Naive thymus-derived CD4-positive, alpha-beta T cell (primary cell): ENCODE measurements at regions of chr5 and their contacts with region 1.

Region 1: DNA sequence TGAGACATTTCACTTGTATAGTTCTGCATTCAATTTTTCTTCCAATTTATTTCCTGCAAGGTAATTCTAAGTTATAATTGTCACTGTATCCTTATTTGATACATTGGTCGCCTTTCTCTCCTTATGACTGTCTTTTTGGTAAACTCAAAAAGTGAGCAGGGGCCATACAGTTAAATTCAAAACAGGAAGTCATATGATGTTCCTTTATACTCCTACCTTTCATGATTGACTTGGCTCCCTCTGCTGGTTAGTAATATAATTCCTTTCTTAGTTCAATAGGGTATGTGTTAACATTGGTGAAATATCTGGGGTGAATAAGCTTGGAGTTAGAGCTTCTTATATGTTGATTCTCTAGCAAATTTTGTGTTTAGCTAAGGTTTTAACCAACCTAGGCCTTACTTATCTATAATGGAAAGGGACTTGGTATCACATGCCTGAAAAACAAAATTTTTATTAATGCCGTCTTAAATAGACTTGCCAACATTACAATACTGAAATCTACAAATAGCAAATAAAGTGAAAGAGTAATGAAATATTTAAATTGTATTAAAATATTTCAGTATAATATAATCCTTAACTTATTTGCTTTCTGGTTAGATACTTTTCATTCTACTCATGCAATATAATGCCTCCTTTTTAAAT is 6.0 kb upstream of the NIPBL start:
- DNase-seq: peak in 7 of 9 donors; percentile 56 to 78 (median 71)
- ATAC-seq: peak; percentile 92
- H3K4me3 ChIP-seq: no peak overlapping the region
- H3K4me3 Mint-ChIP-seq: peak overlapping the region in 9 of 10 donors; percentile 13 to 75 (median 57)
- H3K27ac ChIP-seq: no peak overlapping the region
- H3K27ac Mint-ChIP-seq: peak overlapping the region in 8 of 9 donors; percentile 6 to 70 (median 38)
- H3K4me1 ChIP-seq: peaks cover 12% of the 10 kb centered on the region in 2 donors
- H3K4me1 Mint-ChIP-seq: peaks cover 20 to 64% (median 53%) of the 10 kb centered on the region in 7 donors
- H3K27me3 ChIP-seq: no peaks in the 10 kb centered on the region
- H3K27me3 Mint-ChIP-seq: no peaks in the 10 kb centered on the region

Region 2: GRCh38 chr5:36744773-36745589 is 125.5 kb before region 1 on chr5:
- CTCF ChIA-PET with region 1: interaction called, 13 read pairs
- POLR2A ChIA-PET with region 1: no interaction called
- intact Hi-C with region 1: loop called in 1 of 2 experiments (anchors 1 kb)
- DNase-seq: peak in 8 of 9 donors; percentile 14 to 45 (median 29)
- ATAC-seq: peak; percentile 60
- H3K4me3 ChIP-seq: peak overlapping the region; percentile 68
- H3K4me3 Mint-ChIP-seq: peak overlapping the region; percentile 85 to 95 (median 90)
- H3K27ac ChIP-seq: no peak overlapping the region
- H3K27ac Mint-ChIP-seq: peak overlapping the region in 3 of 9 donors; percentile 12 to 33 (median 28)
- H3K4me1 ChIP-seq: peaks cover 0 to 4% of the 10 kb centered on the region in 2 donors
- H3K4me1 Mint-ChIP-seq: peaks cover 12 to 19% (median 16%) of the 10 kb centered on the region in 7 donors
- H3K27me3 ChIP-seq: peaks cover 0 to 5% of the 10 kb centered on the region in 2 donors
- H3K27me3 Mint-ChIP-seq: peaks cover 46 to 64% (median 54%) of the 10 kb centered on the region in 5 donors